BJ (cell line): ENCODE measurements at regions of chr7 and their contacts with region 1.

Region 1: DNA sequence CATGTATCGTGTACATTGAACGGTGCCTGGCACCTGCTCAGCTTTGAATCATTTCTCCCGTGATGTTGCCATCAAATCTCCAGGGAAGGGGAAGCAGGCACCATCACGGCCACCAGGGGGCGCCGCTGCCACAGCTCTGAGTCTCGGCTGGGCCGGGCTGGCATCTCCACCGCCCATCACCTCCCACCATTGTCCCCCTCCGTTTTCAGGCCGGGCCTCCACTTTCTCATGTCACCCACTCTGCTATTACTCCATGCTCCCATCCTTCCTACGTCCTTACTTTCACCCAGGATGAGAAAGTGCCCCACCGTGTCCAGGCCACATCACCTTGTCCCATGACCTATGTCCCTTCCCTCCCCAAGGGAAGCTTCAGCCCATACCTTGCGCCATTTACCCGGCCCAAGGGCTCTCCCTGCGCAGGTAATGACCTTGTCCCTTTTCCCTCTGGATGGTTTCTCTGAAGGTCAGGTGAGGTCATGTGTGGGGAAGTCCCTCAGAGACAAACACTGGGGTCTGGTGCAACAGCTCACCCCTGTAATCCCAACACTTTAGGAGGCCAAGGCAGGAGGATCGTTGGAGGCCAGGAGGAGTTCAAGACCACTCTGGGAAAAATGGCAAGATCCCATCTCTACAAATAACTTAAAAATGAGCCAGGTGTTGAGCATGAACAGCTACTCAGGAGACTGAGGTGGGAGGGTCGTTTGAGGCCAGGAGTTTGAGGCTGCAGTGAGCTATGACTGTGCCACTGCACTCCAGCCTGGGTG is 31.8 kb upstream of the OCM2 start:
- DNase-seq: no peak
- H3K4me3 ChIP-seq: no peak overlapping the region
- H3K27me3 ChIP-seq: no peaks in the 10 kb centered on the region; the same call in 1 of the 2 replicates
- CTCF ChIP-seq: peak; percentile 98

Region 2: GRCh38 chr7:98038731-98039130 is 17.0 kb after region 1 on chr7:
- CTCF ChIA-PET with region 1: interaction called, 10 read pairs
- POLR2A ChIA-PET with region 1: no interaction called
- DNase-seq: no peak
- H3K4me3 ChIP-seq: no peak overlapping the region
- H3K27me3 ChIP-seq: no peaks in the 10 kb centered on the region
- CTCF ChIP-seq: no peak

Region 3: GRCh38 chr7:98162758-98163157 is 141.0 kb after region 1 on chr7:
- CTCF ChIA-PET with region 1: interaction called, 291 read pairs
- POLR2A ChIA-PET with region 1: no interaction called
- DNase-seq: no peak
- H3K4me3 ChIP-seq: no peak overlapping the region
- H3K27me3 ChIP-seq: no peaks in the 10 kb centered on the region
- CTCF ChIP-seq: no peak

Region 4: DNA sequence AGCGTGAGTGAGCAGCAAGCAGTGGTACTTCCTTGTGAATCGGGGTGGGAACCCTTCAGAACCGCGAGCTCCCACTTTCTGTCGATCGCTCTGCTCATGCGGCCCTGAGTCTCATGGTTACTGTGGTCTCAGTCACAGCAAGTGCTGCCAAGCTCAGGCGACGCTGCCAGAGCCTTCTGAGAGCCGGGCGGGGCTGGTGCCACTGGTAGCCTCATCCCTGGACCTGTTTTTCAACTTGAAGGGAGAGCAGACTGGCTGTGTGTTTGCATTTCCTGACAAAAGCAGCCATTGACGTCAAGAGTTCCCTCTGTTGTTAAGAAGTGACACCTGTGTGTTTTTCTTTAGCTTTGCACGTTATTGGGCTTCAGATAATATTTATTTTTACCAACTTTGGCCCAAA is 156.6 kb after region 1 on chr7:
- CTCF ChIA-PET with region 1: interaction called, 291 read pairs
- POLR2A ChIA-PET with region 1: no interaction called
- DNase-seq: no peak
- H3K4me3 ChIP-seq: no peak overlapping the region
- H3K27me3 ChIP-seq: no peaks in the 10 kb centered on the region
- CTCF ChIP-seq: no peak

Region 5: GRCh38 chr7:98192781-98193457 is 171.1 kb after region 1 on chr7:
- CTCF ChIA-PET with region 1: no interaction called
- POLR2A ChIA-PET with region 1: no interaction called
- DNase-seq: no peak
- H3K4me3 ChIP-seq: no peak overlapping the region
- H3K27me3 ChIP-seq: no peaks in the 10 kb centered on the region
- CTCF ChIP-seq: no peak